ENCODE measurements at regions of chr2 and their contacts with region 1.

Region 1: GRCh38 chr2:230691005-230691647 is 21.5 kb upstream of the CAB39 start:
- DNase-seq: peak; percentile 99
- ATAC-seq: peak; percentile 77
- H3K4me3 ChIP-seq: no peak overlapping the region; the same call in 1 of the 2 replicates
- H3K27ac ChIP-seq: peak overlapping the region; percentile 82
- H3K4me1 ChIP-seq: peaks cover 66% of the 10 kb centered on the region
- H3K27me3 ChIP-seq: no peaks in the 10 kb centered on the region
- CTCF ChIP-seq: no peak

Region 2: GRCh38 chr2:230640540-230641011 is 50.5 kb before region 1 on chr2:
- CTCF ChIA-PET with region 1: no interaction called
- POLR2A ChIA-PET with region 1: no interaction called
- intact Hi-C with region 1: loop called (anchors 1 kb)
- DNase-seq: peak; percentile 86
- ATAC-seq: peak; percentile 97
- H3K4me3 ChIP-seq: no peak overlapping the region
- H3K27ac ChIP-seq: peak overlapping the region; percentile 79
- H3K4me1 ChIP-seq: peaks cover 13% of the 10 kb centered on the region
- H3K27me3 ChIP-seq: no peaks in the 10 kb centered on the region
- CTCF ChIP-seq: no peak